Activated CD8-positive, alpha-beta T cell treated with anti-CD3 and anti-CD28 coated beads for 36 hours (primary cell): ENCODE measurements at regions of chr17 and their contacts with region 1.

Region 1: DNA sequence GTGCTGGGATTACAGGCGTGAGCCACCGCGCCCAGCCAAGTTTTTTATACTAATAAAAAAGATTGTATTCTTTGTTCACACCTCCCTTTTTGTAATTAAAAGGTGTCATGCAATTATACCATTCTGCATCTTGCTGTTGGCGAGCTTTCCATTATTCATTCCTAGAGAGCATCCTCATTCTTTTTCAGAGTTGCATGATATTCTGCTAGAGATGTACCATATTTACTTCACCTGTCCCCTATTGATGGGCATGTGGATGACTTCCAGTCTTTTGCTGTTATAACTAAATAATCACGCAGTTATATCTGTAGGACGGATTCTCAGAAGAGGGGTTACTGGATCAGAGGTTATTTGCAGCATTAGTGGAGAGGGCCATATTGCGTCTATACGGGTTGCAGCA is 17.0 kb downstream of the SGSM2 start:
- DNase-seq: no peak
- ATAC-seq: no peak
- H3K4me3 Mint-ChIP-seq: no peak overlapping the region
- H3K27ac Mint-ChIP-seq: peak overlapping the region; percentile 28
- H3K4me1 Mint-ChIP-seq: peaks cover 16% of the 10 kb centered on the region
- H3K27me3 Mint-ChIP-seq: no peaks in the 10 kb centered on the region
- CTCF ChIP-seq: no peak

Region 2: GRCh38 chr17:2303204-2304188 is 50.8 kb before region 1 on chr17 and contains the starts of genes SMG6 and SRR:
- CTCF ChIA-PET with region 1: interaction called, 10 read pairs
- POLR2A ChIA-PET with region 1: no interaction called
- intact Hi-C with region 1: no loop called
- DNase-seq: peak; percentile 95
- ATAC-seq: peak; percentile 90
- H3K4me3 Mint-ChIP-seq: peak within 1 kb of the TSS; percentile 92
- H3K27ac Mint-ChIP-seq: peak within 1 kb of the TSS; percentile 83
- H3K4me1 Mint-ChIP-seq: peaks cover 38% of the 10 kb centered on the region
- H3K27me3 Mint-ChIP-seq: no peaks in the 10 kb centered on the region
- CTCF ChIP-seq: no peak
- total RNA-seq, gene SMG6: 39.6 to 40.4 TPM
- total RNA-seq, gene SRR: 9.6 to 12.7 TPM